Activated T-helper 1 cell treated with anti-CD3 and anti-CD28 coated beads, Interleukin-12 subunit alpha, Interleukin-12 subunit beta, Interleukin-2, Interleukin-4 antibody, amounts not matched to agents 30 ng/mL and 10 ng/mL and 1 ng/mL, durations not matched to agents 14 hours and 24 hours and 36 hours (primary cell): ENCODE measurements at regions of chr4 and their contacts with region 1.

Region 1: GRCh38 chr4:4248029-4248884 is at the start of gene TMEM128:
- DNase-seq: peak; percentile 91
- H3K4me3 Mint-ChIP-seq: peak within 1 kb of the TSS; percentile 87
- H3K27ac Mint-ChIP-seq: peak within 1 kb of the TSS; percentile 97
- H3K4me1 Mint-ChIP-seq: peaks cover 35% of the 10 kb centered on the region
- H3K27me3 Mint-ChIP-seq: peaks cover 4% of the 10 kb centered on the region
- total RNA-seq, gene TMEM128: 17.7 and 19.9 TPM in 2 replicates

Region 2: DNA sequence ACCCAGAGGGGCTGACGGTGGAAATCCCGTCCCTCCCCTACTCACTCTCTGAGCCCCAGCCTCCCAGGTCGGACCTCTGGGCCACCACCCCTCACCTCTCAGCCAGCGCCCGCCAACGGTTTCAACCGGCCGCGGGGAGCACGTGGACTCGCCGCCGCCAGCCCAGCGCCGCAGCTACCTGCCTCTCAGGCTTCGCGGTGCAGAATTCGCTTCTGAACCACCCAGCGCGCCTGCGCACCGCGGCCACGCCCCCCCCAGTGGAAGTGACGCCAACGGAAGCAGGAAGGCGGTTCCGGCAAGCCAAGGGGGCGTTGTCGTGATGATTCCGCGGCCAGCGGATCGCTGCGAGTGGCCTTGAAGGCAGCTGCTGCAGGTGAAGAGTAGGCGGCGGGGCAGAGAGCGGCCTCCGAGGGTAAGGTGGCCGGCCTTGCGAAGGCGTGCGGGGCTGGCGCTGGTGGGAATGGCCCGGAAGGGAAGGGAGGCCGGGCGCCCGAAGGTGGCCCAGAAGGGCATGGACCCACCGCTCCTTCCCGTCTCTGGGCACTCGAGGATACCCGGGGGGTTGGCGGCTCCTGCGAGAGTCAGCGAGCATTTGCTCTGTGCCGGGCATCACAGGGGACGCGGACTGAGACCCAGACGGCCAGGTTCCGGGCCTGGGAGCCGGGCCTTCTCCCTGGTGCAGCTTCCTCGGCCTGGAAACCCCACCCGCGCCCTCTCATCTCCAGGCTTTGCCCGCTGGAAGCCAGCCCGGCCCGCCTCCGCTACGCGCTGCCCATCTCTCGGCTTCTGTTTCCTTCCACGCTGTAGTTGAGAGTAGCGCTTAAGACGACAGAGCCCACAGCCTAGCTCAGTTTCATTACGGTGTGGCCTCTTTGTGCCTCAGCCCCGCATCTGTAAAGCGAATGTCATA is 41.9 kb after region 1 on chr4 and contains the starts of genes LYAR and ZBTB49:
- intact Hi-C with region 1: loop called (anchors 1 kb)
- DNase-seq: peak; percentile 96
- H3K4me3 Mint-ChIP-seq: peak within 1 kb of the TSS; percentile 97
- H3K27ac Mint-ChIP-seq: peak within 1 kb of the TSS; percentile 90
- H3K4me1 Mint-ChIP-seq: peaks cover 31% of the 10 kb centered on the region
- H3K27me3 Mint-ChIP-seq: no peaks in the 10 kb centered on the region
- total RNA-seq, gene LYAR: 86.8 and 88.3 TPM in 2 replicates
- total RNA-seq, gene ZBTB49: 7.4 and 8.5 TPM in 2 replicates

Region 3: GRCh38 chr4:4334798-4335520 is 86.7 kb after region 1 on chr4:
- intact Hi-C with region 1: loop called (anchors 1 kb)
- DNase-seq: peak; percentile 65
- H3K4me3 Mint-ChIP-seq: no peak overlapping the region
- H3K27ac Mint-ChIP-seq: no peak overlapping the region
- H3K4me1 Mint-ChIP-seq: no peaks in the 10 kb centered on the region
- H3K27me3 Mint-ChIP-seq: peaks cover 2% of the 10 kb centered on the region

Region 4: GRCh38 chr4:4344915-4345527 is 96.8 kb after region 1 on chr4:
- intact Hi-C with region 1: no loop called
- DNase-seq: no peak
- H3K4me3 Mint-ChIP-seq: no peak overlapping the region
- H3K27ac Mint-ChIP-seq: no peak overlapping the region
- H3K4me1 Mint-ChIP-seq: peaks cover 18% of the 10 kb centered on the region
- H3K27me3 Mint-ChIP-seq: no peaks in the 10 kb centered on the region

Region 5: DNA sequence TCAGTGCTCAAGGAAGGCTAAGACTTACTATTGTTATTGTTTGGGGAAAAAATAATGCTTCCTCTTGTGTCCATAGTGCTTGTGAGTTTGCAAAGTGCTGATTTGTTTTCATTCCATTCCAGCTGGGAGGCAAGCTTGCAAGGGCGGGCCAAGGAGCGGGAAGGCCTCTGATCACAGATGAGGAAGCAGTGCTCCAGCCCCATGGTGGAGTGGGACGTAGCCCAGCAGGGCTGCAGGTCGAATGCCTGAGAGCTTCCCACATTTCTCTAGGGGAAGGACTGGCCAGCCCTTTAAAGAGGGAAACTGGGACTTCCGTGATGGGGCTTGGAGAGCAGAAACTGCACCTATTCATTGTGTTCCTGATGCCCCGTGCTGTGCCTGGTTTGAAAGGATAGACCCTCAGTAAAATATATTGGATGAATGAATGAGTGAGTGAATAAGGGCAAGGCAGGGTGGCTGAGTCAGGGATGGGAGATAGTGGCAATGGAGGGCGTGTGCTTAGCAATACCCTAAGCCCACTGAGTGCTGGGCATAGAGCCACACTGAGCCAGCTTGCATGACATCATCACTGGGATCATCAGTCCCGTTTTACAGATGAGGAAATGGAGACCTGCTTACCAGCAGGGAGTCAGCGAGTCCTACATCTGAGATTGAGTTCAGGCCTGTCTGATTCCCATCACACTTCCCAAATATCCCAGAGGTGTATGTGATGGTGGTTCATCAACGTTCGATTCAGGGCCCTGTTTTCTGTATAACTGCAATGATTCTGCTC is 120.7 kb after region 1 on chr4:
- intact Hi-C with region 1: no loop called
- DNase-seq: no peak
- H3K4me3 Mint-ChIP-seq: no peak overlapping the region
- H3K27ac Mint-ChIP-seq: no peak overlapping the region
- H3K4me1 Mint-ChIP-seq: no peaks in the 10 kb centered on the region
- H3K27me3 Mint-ChIP-seq: peaks cover 6% of the 10 kb centered on the region

Region 6: DNA sequence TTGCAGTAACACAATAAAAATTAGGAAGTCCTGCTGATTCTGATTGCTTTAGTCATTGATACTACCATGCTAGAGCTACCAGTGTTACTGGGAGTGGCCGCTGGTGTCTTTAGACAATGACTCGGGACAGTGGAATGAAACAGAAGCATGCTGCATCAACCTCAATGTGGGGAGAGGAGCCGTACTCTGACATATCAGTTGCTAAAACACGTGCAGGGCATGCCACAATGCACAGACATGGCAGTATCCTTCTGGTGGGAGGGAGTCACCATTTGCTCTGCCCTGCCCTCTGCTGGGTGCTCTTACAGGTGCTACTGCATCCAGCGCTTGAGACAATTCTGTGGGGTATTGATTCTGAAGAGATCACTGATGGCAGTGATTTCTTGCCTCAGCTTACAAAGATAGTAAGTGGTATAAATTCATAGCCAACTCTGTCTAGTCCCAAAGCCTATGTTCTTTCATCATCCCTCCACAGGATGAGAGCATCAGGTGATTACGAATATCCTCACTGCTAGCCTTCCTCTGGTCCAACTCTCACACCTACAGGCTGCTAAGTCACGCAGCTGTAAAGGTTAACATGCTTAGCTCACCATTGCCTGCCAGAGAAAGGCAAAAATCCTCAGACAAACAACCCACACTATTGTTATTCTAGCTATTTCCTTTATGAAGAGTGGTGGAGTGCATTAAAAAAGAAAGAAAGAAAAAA is 182.4 kb after region 1 on chr4:
- intact Hi-C with region 1: loop called (anchors 1 kb)
- DNase-seq: no peak
- H3K4me3 Mint-ChIP-seq: no peak overlapping the region
- H3K27ac Mint-ChIP-seq: no peak overlapping the region
- H3K4me1 Mint-ChIP-seq: peaks cover 7% of the 10 kb centered on the region
- H3K27me3 Mint-ChIP-seq: no peaks in the 10 kb centered on the region

Region 7: DNA sequence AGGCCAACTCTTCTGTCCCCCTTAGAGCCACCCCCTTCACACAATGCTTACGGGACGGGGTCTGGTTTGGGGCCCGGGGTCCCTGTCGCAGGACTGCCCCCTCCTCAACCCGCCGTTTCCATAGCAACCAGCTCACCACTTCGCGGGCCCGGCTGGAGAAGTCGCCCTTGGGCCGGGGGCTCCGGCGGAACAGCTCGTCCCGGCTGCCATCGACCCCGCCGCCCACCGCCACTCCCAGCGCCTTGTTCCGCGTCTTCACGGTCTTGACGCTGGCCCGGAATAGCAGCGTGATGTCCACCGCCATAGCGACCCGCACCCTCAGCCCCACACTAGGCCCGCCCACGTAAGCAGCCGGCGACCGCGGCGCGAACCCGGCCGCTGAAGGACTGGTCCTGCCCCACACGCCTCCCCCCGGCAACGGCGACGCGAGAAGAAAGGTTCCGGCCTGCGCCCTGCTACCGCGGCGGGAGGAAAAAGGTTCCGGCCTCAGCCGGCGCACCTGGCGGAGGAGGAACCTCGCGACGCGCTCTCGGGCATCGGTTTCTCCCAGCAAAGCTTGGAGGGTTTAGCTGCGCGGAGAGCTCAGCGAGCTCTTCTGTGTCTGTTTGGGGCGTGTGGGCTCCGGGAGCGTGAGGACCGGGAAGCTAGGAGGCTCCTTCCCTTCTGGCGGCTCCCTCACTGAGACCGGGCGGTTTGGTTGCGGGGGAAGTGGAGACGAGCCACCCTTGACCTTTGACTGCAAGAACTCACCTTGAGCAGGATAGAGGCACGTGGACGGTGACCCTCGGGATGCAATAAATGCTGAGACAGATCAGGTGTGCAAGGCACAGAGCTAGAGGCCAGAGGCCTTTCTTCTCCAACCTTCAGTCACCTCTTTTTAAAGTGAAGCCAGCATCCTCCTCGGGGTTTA is 293.7 kb after region 1 on chr4 and contains the start of gene STX18:
- intact Hi-C with region 1: loop called (anchors 1 kb)
- DNase-seq: peak; percentile 85
- H3K4me3 Mint-ChIP-seq: peak within 1 kb of the TSS; percentile 98
- H3K27ac Mint-ChIP-seq: peak within 1 kb of the TSS; percentile 98
- H3K4me1 Mint-ChIP-seq: peaks cover 46% of the 10 kb centered on the region
- H3K27me3 Mint-ChIP-seq: no peaks in the 10 kb centered on the region
- total RNA-seq, gene STX18: 34.6 and 35.4 TPM in 2 replicates